Right cardiac atrium (tissue), 5 donors: ENCODE measurements at regions of chr5 and their contacts with region 1.

Region 1: DNA sequence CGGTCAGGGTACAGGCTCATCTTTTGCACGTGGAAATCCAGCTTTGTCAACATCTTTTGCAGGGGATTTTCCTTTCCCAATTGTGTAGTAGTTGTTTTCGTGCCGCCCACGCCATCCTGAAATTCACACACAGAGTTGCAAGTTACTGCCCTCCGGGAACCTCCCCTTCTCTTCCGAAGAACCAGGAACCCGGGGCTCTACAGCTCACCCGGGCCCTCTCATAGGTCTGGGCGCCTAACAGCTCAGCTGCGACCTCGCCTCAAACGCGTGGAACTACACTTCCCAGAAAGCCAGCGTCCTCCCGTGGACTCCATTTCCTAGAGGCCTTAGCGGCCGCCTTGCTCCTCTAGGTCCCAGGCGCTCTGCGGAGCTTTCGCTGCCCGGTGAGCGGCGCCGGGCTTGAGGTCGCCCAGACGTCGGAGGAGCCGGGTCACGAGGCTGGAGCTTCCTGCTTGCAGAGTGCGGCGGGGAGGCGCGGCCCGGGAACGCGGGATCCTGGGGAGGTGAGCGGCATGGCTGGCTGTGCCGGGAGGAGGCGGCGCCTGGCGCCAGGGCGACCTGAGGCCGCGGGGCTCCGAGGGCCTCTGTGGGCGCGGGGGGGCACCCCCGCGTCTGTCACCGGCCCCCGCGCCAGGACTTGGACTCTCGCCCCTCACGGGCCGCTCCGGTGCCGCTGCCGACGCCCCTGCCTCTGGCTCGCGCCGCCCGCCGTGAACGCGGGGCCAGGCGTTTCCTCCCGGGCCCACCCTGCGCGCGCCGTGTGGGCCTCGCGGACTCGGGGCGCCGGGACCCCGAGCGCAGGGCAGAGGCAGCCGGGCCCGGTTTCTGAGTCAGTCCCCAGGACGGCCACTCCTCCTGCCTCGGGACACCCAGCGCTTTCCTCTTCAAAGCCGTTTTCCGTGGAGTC is at the start of gene ZNF354B:
- DNase-seq: peak; percentile 93 to 95 (median 95)
- ATAC-seq: peak; percentile 99 to 100
- H3K4me3 ChIP-seq: peak within 1 kb of the TSS; percentile 72
- H3K27ac ChIP-seq: peak within 1 kb of the TSS; percentile 19
- H3K4me1 ChIP-seq: no peaks in the 10 kb centered on the region
- H3K27me3 ChIP-seq: no peaks in the 10 kb centered on the region
- total RNA-seq, gene ZNF354B: 7.4 to 9.3 (median 8.8) TPM

Region 2: GRCh38 chr5:178739452-178740193 is 120.3 kb before region 1 on chr5:
- intact Hi-C with region 1: loop called in 1 of 4 experiments (anchors 5 kb)
- DNase-seq: no peak
- ATAC-seq: no peak
- H3K4me3 ChIP-seq: no peak overlapping the region
- H3K27ac ChIP-seq: no peak overlapping the region
- H3K4me1 ChIP-seq: no peaks in the 10 kb centered on the region
- H3K27me3 ChIP-seq: no peaks in the 10 kb centered on the region